ENCODE measurements at regions of chr5 and their contacts with region 1.

Region 1: DNA sequence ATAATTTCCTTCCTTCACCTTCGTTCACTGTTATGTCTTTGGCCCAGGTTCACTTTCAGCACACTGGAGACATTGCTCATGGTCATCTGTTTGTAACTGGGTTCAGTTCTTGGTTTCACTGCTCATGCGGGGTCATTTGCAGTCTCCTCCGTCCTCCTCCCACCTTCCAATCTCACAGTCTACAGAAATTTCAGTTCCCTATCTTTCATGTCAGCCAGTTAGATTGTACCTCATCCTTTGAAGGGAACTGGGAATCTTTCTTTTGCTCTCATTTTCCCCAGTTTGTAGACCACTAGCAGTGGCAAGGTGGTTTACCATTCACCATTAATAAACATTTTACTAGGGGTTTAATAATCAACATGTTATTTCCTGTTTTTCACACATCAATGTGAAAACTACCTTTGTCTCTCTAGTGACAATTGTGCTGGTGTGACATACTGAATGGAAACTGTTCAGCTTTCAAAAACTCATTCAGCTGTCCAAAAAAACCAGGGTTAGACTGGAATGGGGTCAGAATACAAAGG is 100.9 kb upstream of the IL6ST start:
- DNase-seq: peak; percentile 96
- ATAC-seq: peak; percentile 87
- H3K4me3 ChIP-seq: no peak overlapping the region
- H3K27ac ChIP-seq: peak overlapping the region; percentile 76
- H3K4me1 ChIP-seq: peaks cover 21% of the 10 kb centered on the region
- H3K27me3 ChIP-seq: no peaks in the 10 kb centered on the region
- CTCF ChIP-seq: no peak
- EP300 ChIP-seq: peak; percentile 79 to 90
- POLR2A ChIP-seq: no peak
- RAD21 ChIP-seq: no peak

Region 2: GRCh38 chr5:55969956-55970355 is 125.7 kb before region 1 on chr5:
- CTCF ChIA-PET with region 1: no interaction called
- POLR2A ChIA-PET with region 1: no interaction called
- RAD21 ChIA-PET with region 1: no interaction called
- SMC1A ChIA-PET with region 1: no interaction called
- in situ Hi-C with region 1: no loop called
- intact Hi-C with region 1: no loop called
- DNase-seq: no peak
- ATAC-seq: no peak
- H3K4me3 ChIP-seq: no peak overlapping the region
- H3K27ac ChIP-seq: no peak overlapping the region
- H3K4me1 ChIP-seq: no peaks in the 10 kb centered on the region
- H3K27me3 ChIP-seq: no peaks in the 10 kb centered on the region
- CTCF ChIP-seq: no peak
- EP300 ChIP-seq: no peak
- POLR2A ChIP-seq: no peak
- RAD21 ChIP-seq: no peak

Region 3: GRCh38 chr5:55982957-55983381 is 112.7 kb before region 1 on chr5:
- CTCF ChIA-PET with region 1: interaction called, 5 read pairs
- POLR2A ChIA-PET with region 1: interaction called, 3 read pairs
- RAD21 ChIA-PET with region 1: interaction called, 24 read pairs
- SMC1A ChIA-PET with region 1: interaction called, 7 read pairs
- in situ Hi-C with region 1: no loop called
- intact Hi-C with region 1: no loop called
- DNase-seq: no peak
- ATAC-seq: peak; percentile 28
- H3K4me3 ChIP-seq: no peak overlapping the region
- H3K27ac ChIP-seq: no peak overlapping the region
- H3K4me1 ChIP-seq: peaks cover 1% of the 10 kb centered on the region
- H3K27me3 ChIP-seq: no peaks in the 10 kb centered on the region
- CTCF ChIP-seq: peak in 2 of 3 experiments; percentile 14 to 50; a peak in 3 of 6 replicates
- EP300 ChIP-seq: no peak
- POLR2A ChIP-seq: no peak
- RAD21 ChIP-seq: peak; percentile 38

Region 4: DNA sequence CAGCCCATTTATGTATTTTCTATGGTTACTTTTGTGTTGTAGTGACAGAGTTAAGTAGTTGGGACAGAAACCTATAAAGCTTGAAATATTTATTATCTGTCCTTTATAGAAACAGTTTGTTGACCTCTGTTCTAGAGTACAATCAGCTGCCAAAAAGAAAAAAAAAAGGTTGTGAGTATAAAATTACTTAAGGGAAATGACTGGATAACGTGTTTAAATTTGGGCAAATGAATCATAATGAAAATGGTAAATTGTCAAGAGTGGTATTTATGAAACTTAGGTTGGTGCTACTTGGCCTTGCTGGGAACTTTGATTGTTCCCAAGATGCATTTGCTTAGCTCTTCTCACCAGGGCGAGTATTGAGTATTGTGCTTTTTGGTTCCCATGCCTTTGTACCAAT is 30.7 kb before region 1 on chr5:
- CTCF ChIA-PET with region 1: interaction called, 5 read pairs
- POLR2A ChIA-PET with region 1: interaction called, 4 read pairs
- RAD21 ChIA-PET with region 1: interaction called, 45 read pairs
- SMC1A ChIA-PET with region 1: interaction called, 49 read pairs
- in situ Hi-C with region 1: no loop called
- intact Hi-C with region 1: no loop called
- DNase-seq: peak; percentile 95
- ATAC-seq: peak; percentile 68
- H3K4me3 ChIP-seq: no peak overlapping the region
- H3K27ac ChIP-seq: peak overlapping the region; percentile 28
- H3K4me1 ChIP-seq: peaks cover 16% of the 10 kb centered on the region
- H3K27me3 ChIP-seq: no peaks in the 10 kb centered on the region
- CTCF ChIP-seq: no peak
- EP300 ChIP-seq: peak in 1 of 2 experiments; percentile 91; a peak in 2 of 4 replicates
- POLR2A ChIP-seq: no peak
- RAD21 ChIP-seq: no peak

Region 5: DNA sequence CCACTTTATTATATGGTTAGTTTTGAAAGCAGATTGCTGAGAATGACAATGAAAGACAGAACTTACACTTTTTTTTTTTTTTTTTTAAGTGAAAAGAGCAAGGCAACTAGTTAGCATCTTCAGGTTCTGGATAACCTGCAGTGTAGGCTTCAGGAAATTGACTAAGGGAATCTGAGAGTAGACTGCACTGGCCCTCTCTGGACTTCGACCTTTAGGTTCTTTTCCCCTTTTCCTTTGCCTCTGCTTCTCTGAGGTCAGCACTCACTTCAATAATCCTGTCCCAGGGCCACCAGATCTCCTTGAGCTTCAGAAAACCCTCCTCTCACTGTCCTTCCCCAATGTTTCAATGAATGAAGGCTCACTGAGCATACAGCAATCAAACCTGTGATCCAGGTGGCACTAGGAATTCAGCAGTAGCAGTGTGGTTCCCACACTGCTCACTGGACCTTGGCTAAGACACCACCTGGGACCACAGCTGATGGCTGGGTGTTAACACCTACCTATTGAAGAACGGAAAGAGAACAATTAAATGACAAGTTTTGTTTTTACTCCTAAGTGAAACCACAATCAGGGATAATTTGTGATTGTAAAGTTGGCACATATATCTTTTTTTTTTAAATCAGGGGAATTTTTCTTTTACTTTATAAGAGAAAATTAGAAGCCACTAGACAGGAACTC is 15.1 kb before region 1 on chr5:
- CTCF ChIA-PET with region 1: interaction called, 8 read pairs
- POLR2A ChIA-PET with region 1: interaction called, 38 read pairs
- RAD21 ChIA-PET with region 1: interaction called, 92 read pairs
- SMC1A ChIA-PET with region 1: interaction called, 130 read pairs
- in situ Hi-C with region 1: no loop called
- intact Hi-C with region 1: loop called (anchors 1 kb)
- DNase-seq: peak; percentile 98
- ATAC-seq: peak; percentile 82
- H3K4me3 ChIP-seq: no peak overlapping the region
- H3K27ac ChIP-seq: peak overlapping the region; percentile 84
- H3K4me1 ChIP-seq: peaks cover 21% of the 10 kb centered on the region
- H3K27me3 ChIP-seq: no peaks in the 10 kb centered on the region
- CTCF ChIP-seq: no peak
- EP300 ChIP-seq: peak; percentile 83 to 87
- POLR2A ChIP-seq: no peak
- RAD21 ChIP-seq: no peak

Region 6: DNA sequence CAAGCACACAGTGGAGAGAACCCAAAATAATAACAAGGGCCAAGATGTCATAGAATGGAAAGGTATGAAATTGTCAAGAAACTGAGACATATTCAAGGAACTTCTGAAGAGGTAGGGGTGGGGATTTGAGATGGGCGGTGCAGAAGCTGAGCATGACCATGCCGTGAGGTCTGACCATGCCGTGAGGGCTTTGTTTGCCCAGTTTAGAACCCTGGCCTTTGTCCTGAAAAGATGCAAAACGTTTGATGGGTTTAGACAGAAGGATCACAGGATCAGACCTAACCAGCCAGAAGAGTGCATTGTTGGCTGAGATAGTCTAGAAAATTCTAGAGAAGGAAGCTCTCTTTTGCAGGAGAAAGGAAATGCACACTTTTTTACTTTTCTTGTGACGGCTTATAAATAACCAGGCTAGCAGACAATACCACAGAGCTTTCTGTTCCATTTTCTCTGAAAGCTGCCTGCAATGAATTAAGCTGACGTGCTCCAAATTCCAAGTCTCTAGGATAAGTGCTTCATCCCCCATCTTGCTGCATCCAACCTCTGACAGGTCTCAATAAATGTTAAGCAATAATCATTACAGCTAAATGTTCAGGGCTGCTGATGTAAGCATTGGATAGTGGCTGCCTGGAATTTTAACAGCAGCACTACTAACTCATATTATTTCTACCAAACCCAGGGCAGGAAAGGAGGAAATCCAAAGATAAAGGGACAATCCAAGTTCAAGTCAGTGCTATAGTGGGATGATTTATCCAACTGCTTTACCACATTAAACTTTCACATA is 10.1 kb after region 1 on chr5:
- CTCF ChIA-PET with region 1: interaction called, 6 read pairs
- POLR2A ChIA-PET with region 1: interaction called, 8 read pairs
- RAD21 ChIA-PET with region 1: interaction called, 24 read pairs
- SMC1A ChIA-PET with region 1: interaction called, 15 read pairs
- in situ Hi-C with region 1: no loop called
- intact Hi-C with region 1: no loop called
- DNase-seq: no peak
- ATAC-seq: peak; percentile 78
- H3K4me3 ChIP-seq: no peak overlapping the region; the same call in 1 of the 2 replicates
- H3K27ac ChIP-seq: no peak overlapping the region
- H3K4me1 ChIP-seq: peaks cover 3% of the 10 kb centered on the region; the same call in 1 of the 2 replicates
- H3K27me3 ChIP-seq: no peaks in the 10 kb centered on the region; a peak in 1 of 4 replicates
- CTCF ChIP-seq: no peak
- EP300 ChIP-seq: 0 out of 4 replicates have a peak, but pooled peaks of 1 of the 2 experiments have one; percentile 16
- POLR2A ChIP-seq: no peak
- RAD21 ChIP-seq: no peak

Region 7: DNA sequence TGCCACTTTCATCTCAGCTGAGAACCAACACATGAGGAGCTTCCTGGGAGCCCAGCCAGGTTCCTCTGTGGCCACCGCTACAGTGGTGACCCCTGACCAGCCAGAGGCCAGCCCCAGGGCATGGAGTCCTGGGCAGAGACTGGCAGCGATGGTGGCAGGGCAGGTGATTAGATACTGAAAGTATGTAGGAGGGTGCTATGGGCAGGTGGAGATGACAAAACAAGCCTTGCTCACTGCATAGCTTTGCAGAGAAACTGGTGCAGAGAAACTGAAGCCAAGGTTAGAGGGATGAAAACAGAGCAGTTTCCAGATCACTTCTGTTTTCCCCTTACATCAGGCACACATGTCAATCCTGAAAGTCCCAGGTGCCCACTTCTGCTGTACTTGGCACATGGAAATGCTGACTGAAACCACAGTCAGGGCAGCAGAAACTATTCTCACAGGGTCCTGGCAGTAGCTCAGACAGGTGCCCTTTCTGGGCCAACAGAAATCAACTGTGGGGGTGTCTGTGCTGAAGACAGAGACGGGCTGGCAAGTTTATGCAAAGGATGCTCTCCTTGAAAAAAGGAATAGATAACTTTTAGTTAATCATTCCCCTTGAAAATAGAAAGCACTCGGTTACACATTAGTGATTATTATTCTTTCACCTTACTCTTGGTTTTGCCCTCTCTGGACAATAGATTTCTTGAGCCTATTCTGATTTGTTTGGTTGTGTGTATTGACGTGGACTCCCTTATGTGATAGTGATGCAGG is 47.2 kb after region 1 on chr5:
- CTCF ChIA-PET with region 1: interaction called, 20 read pairs
- POLR2A ChIA-PET with region 1: interaction called, 16 read pairs
- RAD21 ChIA-PET with region 1: interaction called, 27 read pairs
- SMC1A ChIA-PET with region 1: interaction called, 206 read pairs
- in situ Hi-C with region 1: no loop called
- intact Hi-C with region 1: no loop called
- DNase-seq: peak; percentile 95
- ATAC-seq: peak; percentile 85
- H3K4me3 ChIP-seq: no peak overlapping the region
- H3K27ac ChIP-seq: peak overlapping the region; percentile 19; the same call in 1 of the 2 replicates
- H3K4me1 ChIP-seq: peaks cover 25% of the 10 kb centered on the region
- H3K27me3 ChIP-seq: no peaks in the 10 kb centered on the region; a peak in 1 of 4 replicates
- CTCF ChIP-seq: no peak
- EP300 ChIP-seq: peak; percentile 60 to 80; a peak in 3 of 4 replicates
- POLR2A ChIP-seq: no peak
- RAD21 ChIP-seq: no peak

Region 8: GRCh38 chr5:56155992-56156584 is 60.4 kb after region 1 on chr5:
- CTCF ChIA-PET with region 1: interaction called, 6 read pairs
- POLR2A ChIA-PET with region 1: interaction called, 7 read pairs
- RAD21 ChIA-PET with region 1: interaction called, 21 read pairs
- SMC1A ChIA-PET with region 1: interaction called, 206 read pairs
- in situ Hi-C with region 1: no loop called
- intact Hi-C with region 1: no loop called
- DNase-seq: no peak
- ATAC-seq: peak; percentile 49
- H3K4me3 ChIP-seq: no peak overlapping the region
- H3K27ac ChIP-seq: peak overlapping the region; percentile 36
- H3K4me1 ChIP-seq: peaks cover 26% of the 10 kb centered on the region
- H3K27me3 ChIP-seq: no peaks in the 10 kb centered on the region
- CTCF ChIP-seq: no peak
- EP300 ChIP-seq: peak in 1 of 2 experiments; percentile 21; a peak in 2 of 4 replicates
- POLR2A ChIP-seq: no peak
- RAD21 ChIP-seq: no peak

Measured in GM12878 (cell line).